Heart right ventricle (tissue), 16 donors: ENCODE measurements at regions of chr3 and their contacts with region 1.

Region 1: DNA sequence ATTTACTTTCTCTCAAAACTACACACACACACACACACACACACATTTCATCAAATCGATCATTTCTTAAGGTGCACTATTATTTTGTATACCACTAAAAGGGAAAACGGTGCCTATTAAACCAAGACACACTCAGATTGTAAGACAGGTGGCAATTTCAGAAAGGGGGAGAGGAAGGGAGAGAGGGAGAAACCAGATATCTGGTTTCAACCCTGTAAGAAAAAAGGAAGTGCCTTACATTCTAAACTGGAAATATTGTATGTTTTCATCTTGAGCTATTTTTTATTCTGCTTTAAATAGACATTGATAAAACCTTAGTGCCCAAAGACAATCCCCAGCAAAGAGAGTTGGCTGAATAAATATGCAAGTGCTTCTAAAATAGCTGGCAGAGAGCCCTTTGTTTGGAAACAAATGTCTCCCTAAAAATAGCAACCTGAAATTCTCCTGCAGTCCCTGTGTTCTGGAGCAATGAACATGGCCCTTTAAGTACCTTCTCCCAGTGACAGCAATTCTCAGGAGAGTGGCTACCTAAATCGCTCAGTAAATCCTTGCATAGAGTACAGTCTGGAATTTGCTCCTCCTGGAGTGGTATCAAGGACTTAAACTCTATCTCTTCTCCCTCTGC is 85.7 kb downstream of the RARB start:
- DNase-seq: peak in 1 of 2 donors; percentile 39
- ATAC-seq: peak; percentile 60 to 83 (median 72)
- H3K4me3 ChIP-seq: no peak overlapping the region
- H3K27ac ChIP-seq: peak overlapping the region; percentile 31 to 82 (median 66)
- H3K4me1 ChIP-seq: peaks cover 7 to 68% (median 31%) of the 10 kb centered on the region in 9 donors
- H3K27me3 ChIP-seq: no peaks in the 10 kb centered on the region
- CTCF ChIP-seq: no peak

Region 2: DNA sequence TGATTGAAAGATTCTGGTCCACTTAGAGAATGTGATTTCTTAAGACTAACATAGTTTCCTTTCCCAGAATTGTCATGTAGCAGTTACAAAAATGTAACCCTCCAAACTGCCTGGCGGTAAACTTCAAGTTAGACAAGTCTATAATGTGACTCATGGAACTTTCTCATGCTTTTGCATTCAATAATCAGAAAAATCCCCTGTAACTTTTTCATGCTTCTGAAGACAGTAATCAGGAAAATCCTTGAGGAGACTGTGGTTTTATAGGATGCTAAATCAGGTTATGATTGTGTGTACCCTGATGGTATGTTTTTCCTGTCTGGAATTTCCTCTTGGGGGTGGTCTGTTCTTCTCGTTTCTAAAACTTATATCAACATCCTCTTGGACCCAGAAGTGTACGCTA is 159.7 kb before region 1 on chr3:
- intact Hi-C with region 1: no loop called
- DNase-seq: no peak
- ATAC-seq: no peak
- H3K4me3 ChIP-seq: no peak overlapping the region
- H3K27ac ChIP-seq: no peak overlapping the region
- H3K4me1 ChIP-seq: peaks cover 0 to 8% (median 0%) of the 10 kb centered on the region in 9 donors
- H3K27me3 ChIP-seq: no peaks in the 10 kb centered on the region
- CTCF ChIP-seq: no peak

Region 3: GRCh38 chr3:25433868-25434267 is 79.9 kb before region 1 on chr3:
- intact Hi-C with region 1: loop called in 1 of 10 experiments (anchors 5 kb)
- DNase-seq: peak; percentile 17 to 32
- ATAC-seq: peak; percentile 26 to 78 (median 56)
- H3K4me3 ChIP-seq: peak overlapping the region in 4 of 10 donors; percentile 10 to 81 (median 43)
- H3K27ac ChIP-seq: peak overlapping the region in 8 of 10 donors; percentile 27 to 97 (median 90)
- H3K4me1 ChIP-seq: peaks cover 2 to 52% (median 32%) of the 10 kb centered on the region in 9 donors
- H3K27me3 ChIP-seq: peaks cover 0 to 8% (median 0%) of the 10 kb centered on the region in 7 donors
- CTCF ChIP-seq: no peak

Region 4: GRCh38 chr3:25707268-25707926 is 193.6 kb after region 1 on chr3:
- intact Hi-C with region 1: no loop called
- DNase-seq: no peak
- ATAC-seq: no peak
- H3K4me3 ChIP-seq: no peak overlapping the region
- H3K27ac ChIP-seq: no peak overlapping the region
- H3K4me1 ChIP-seq: no peaks in the 10 kb centered on the region
- H3K27me3 ChIP-seq: peaks cover 0 to 16% (median 4%) of the 10 kb centered on the region in 7 donors
- CTCF ChIP-seq: no peak